BJ (cell line): ENCODE measurements at regions of chr13 and their contacts with region 1.

Region 1: DNA sequence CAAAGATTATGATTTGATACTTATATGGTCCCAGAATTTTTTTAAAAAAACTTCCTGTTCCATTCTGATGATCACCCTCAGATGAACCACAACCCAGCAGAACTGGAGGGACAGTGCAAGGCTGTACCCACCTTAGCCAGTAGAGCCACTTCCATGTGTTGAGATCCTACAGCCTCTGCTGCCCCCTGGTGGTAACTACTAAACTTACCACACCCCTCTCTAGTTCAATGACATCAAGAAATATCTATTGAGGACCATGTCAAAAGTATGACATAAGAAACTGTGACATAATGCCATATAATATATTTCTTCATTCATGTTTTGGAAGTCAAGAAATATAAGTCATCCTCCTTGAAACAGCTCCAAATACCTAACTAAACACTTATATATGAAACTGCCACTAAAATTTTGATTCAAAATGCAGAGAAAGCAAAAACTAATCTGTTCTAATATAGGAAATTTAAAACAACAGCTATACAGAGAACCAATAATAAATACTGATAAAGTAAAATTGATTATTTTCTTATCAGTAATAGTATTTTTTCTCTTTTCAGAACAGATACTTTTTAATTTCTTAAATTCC is 412.6 kb downstream of the KCTD12 start:
- DNase-seq: peak; percentile 4
- H3K4me3 ChIP-seq: no peak overlapping the region
- H3K27me3 ChIP-seq: peaks cover 6% of the 10 kb centered on the region; the same call in 1 of the 2 replicates
- CTCF ChIP-seq: peak; percentile 77

Region 2: DNA sequence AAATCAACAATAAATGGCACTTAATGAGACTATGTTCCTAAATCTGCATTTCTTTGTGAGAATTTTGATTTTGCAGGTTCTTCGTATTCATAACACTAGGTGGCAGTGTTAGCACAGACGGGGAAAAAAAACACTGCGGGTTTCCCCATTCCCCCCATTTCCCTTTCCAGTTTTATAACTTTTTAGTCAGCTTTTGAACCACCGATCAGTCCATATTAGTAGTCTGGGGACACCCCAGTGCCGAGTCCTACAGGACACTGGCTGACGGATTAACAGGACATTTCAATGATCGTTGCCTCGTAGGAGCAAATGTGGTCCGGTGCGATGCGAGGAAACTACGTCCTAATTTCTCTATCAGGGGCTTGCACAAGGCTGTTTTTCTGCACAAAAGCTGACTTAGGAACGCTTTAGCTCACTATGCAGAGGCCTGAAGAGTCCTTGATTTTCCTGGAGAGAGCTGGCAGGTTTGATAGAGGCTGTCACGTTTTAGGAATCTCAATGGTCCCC is 603.2 kb before region 1 on chr13:
- CTCF ChIA-PET with region 1: interaction called, 129 read pairs
- POLR2A ChIA-PET with region 1: no interaction called
- DNase-seq: no peak
- H3K4me3 ChIP-seq: peak overlapping the region; percentile 43
- H3K27me3 ChIP-seq: no peaks in the 10 kb centered on the region
- CTCF ChIP-seq: peak; percentile 74

Region 3: DNA sequence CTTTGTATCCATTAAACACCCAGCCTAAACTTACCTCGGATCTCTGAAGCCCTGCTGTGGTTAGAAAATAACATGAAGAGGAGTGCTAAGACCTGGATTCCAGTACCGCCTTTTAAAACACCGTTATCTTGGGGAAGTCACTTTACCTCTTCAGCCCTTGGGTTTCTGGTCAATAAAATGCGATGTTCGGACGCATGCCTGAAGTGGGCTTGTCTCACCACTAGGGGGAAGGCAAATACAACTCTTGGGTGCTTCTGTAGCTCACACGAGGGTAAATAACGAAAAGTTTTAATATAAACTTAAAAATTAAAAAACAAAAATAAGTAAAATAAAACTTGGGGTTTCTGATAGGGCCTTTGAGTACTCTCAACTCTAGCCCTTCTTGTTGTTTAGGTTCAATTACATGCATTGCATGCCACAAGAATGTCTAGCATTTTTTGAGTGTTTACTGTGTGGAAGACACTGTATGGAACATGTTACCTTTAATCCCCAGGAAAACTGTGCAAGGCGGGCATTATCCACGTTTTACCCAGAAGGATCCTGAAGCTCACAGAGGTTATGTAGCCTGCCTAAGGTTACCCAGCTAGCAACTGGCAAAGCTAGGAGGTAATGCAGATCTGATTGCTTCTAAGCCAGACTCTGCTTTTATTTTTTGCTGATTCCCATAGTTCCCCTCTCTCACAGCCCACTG is 597.1 kb before region 1 on chr13:
- CTCF ChIA-PET with region 1: interaction called, 129 read pairs
- POLR2A ChIA-PET with region 1: no interaction called
- DNase-seq: no peak
- H3K4me3 ChIP-seq: no peak overlapping the region
- H3K27me3 ChIP-seq: no peaks in the 10 kb centered on the region
- CTCF ChIP-seq: peak; percentile 90

Region 4: GRCh38 chr13:76397413-76397812 is 76.2 kb before region 1 on chr13:
- CTCF ChIA-PET with region 1: no interaction called
- POLR2A ChIA-PET with region 1: no interaction called
- DNase-seq: no peak
- H3K4me3 ChIP-seq: no peak overlapping the region
- H3K27me3 ChIP-seq: no peaks in the 10 kb centered on the region
- CTCF ChIP-seq: no peak

Region 5: GRCh38 chr13:76461999-76462398 is 11.6 kb before region 1 on chr13:
- CTCF ChIA-PET with region 1: interaction called, 14 read pairs
- POLR2A ChIA-PET with region 1: no interaction called
- DNase-seq: no peak
- H3K4me3 ChIP-seq: no peak overlapping the region
- H3K27me3 ChIP-seq: no peaks in the 10 kb centered on the region
- CTCF ChIP-seq: no peak